Naive thymus-derived CD8-positive, alpha-beta T cell (primary cell): ENCODE measurements at regions of chr3 and their contacts with region 1.

Region 1: DNA sequence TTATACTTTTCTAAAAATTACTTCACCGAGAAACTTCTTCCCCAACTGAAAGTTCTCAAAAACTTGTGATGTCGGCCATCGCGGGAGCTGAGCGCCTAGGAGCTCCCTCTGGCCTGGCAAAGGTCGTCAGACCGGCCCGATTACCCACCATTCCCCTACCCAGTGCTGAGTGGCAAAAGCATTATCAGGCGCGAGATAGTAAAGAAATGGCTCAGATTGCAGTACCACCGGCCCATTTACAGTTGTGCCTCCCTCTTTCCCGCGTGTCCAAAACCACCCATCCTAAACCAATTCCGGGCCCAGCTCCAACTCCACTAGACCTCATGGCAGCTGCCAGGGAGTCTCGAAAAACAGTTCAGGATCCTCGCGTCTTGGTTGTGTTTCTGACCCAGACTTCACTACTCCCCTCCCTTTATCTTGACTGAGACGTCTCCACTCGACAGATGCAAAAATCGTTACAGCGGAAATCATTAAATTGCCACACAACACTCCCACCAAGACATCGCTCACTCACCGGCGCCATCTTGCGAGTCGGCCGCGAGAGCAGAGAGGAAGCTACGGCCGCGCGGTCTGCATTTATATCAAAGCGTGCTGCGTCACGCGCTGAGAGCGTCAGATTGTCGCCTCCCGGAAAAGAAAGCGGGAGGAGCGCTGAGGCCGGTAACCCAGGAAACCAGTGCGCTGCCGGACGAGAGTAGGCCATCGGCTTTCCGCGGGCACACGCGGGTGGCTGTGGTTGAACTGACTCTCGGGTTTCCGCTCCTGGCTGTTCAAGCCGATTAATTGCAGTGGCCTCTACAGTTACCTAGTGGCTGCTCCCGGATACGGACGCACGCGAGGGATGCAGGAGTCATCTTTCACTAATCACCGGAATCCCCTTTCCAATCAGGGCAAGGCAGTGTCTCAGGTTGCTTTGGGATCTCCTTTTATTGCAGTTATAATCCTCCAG is at the start of gene RPL22L1:
- DNase-seq: peak; percentile 73 to 96 (median 91)
- ATAC-seq: peak; percentile 92
- H3K4me3 Mint-ChIP-seq: peak within 1 kb of the TSS; percentile 90 to 99 (median 95)
- H3K27ac Mint-ChIP-seq: peak within 1 kb of the TSS; percentile 95 to 100 (median 98)
- H3K4me1 Mint-ChIP-seq: peaks cover 12 to 42% (median 36%) of the 10 kb centered on the region in 4 donors
- H3K27me3 Mint-ChIP-seq: no peaks in the 10 kb centered on the region
- polyA plus RNA-seq, gene RPL22L1: 31.8 to 43.3 (median 36.2) TPM

Region 2: GRCh38 chr3:170896781-170897180 is 26.9 kb after region 1 on chr3:
- POLR2A ChIA-PET with region 1: no interaction called
- DNase-seq: no peak
- ATAC-seq: no peak
- H3K4me3 Mint-ChIP-seq: no peak overlapping the region
- H3K27ac Mint-ChIP-seq: no peak overlapping the region
- H3K4me1 Mint-ChIP-seq: no peaks in the 10 kb centered on the region
- H3K27me3 Mint-ChIP-seq: no peaks in the 10 kb centered on the region

Region 3: DNA sequence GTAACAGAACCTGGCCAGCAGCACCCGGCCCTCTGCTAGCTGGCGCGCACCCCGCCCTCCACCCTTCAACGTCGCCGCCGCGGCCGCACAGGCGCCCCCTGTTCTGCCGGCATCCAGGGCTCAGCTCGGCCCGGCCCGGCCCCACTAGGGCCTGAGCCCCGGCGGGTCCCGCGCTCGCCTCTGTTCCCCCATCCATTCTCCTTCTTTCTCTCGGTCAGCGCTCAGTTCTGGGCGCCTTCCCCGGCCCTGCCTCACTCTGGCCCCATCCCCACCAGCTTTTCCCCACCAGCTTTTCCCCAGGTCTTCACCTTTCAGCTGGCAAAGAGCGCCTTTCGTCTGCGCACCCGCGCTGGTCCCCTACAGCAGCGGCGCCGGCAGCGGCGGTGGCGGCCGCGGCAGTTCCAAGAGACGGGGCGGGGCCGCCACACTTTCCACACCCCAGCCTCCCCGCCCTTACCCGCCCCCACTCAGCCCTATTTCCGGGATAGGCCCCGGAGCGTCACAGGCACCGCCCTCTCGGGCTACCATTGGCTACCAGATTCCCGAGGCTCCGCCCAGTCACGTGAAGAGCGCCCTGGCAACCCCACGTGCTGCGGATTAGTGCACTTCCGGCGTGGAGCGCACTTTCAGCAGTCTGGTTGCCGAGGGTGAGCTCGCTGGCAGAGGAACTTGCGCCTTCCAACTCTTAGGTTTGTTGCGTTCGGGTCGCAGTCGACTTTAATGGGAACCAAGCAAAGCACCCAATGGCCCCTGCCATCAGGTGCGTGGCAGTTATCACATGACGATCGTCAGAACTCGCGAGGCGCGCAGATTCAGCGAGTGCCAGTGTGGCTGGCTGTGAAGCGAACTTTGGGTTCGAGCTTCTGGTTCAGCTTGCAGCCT is 38.6 kb after region 1 on chr3 and contains the start of gene EIF5A2:
- POLR2A ChIA-PET with region 1: interaction called, 28 read pairs
- DNase-seq: peak; percentile 82 to 98 (median 93)
- ATAC-seq: peak; percentile 89 to 94
- H3K4me3 Mint-ChIP-seq: peak within 1 kb of the TSS; percentile 86 to 99 (median 96)
- H3K27ac Mint-ChIP-seq: peak within 1 kb of the TSS; percentile 83 to 98 (median 96)
- H3K4me1 Mint-ChIP-seq: peaks cover 6 to 26% (median 15%) of the 10 kb centered on the region in 4 donors
- H3K27me3 Mint-ChIP-seq: no peaks in the 10 kb centered on the region
- polyA plus RNA-seq, gene EIF5A2: 9.8 to 14.8 (median 11.6) TPM